H1 (cell line): ENCODE measurements at regions of chr4 and their contacts with region 1.

Region 1: GRCh38 chr4:151729731-151730559 is 30.9 kb downstream of the GATB start:
- DNase-seq: no peak
- H3K4me3 ChIP-seq: no peak overlapping the region
- H3K27ac ChIP-seq: no peak overlapping the region
- H3K4me1 ChIP-seq: peaks cover 0 to 3% (median 0%) of the 10 kb centered on the region in 4 experiments; a peak in 1 of 7 replicates
- H3K27me3 ChIP-seq: no peaks in the 10 kb centered on the region
- CTCF ChIP-seq: peak in 2 of 3 experiments; percentile 2; a peak in 2 of 4 replicates
- EP300 ChIP-seq: no peak
- POLR2A ChIP-seq: no peak
- RAD21 ChIP-seq: no peak; a peak in 1 of 4 replicates

Region 2: GRCh38 chr4:151711646-151712045 is 18.3 kb before region 1 on chr4:
- CTCF ChIA-PET with region 1: interaction called, 13 read pairs
- POLR2A ChIA-PET with region 1: interaction called, 4 read pairs
- DNase-seq: no peak
- H3K4me3 ChIP-seq: no peak overlapping the region
- H3K27ac ChIP-seq: no peak overlapping the region
- H3K4me1 ChIP-seq: no peaks in the 10 kb centered on the region; a peak in 1 of 7 replicates
- H3K27me3 ChIP-seq: no peaks in the 10 kb centered on the region
- CTCF ChIP-seq: no peak
- EP300 ChIP-seq: no peak
- POLR2A ChIP-seq: no peak
- RAD21 ChIP-seq: no peak